Sigmoid colon (tissue), 7 donors: ENCODE measurements at regions of chr10 and their contacts with region 1.

Region 1: GRCh38 chr10:132421931-132422751 is 25.1 kb downstream of the PWWP2B start:
- DNase-seq: no peak
- H3K4me3 ChIP-seq: peak overlapping the region in 2 of 4 donors; percentile 27 to 28
- H3K27ac ChIP-seq: peak overlapping the region; percentile 88 to 93 (median 92)
- H3K4me1 ChIP-seq: peaks cover 0 to 72% (median 64%) of the 10 kb centered on the region in 4 donors
- H3K27me3 ChIP-seq: no peaks in the 10 kb centered on the region
- CTCF ChIP-seq: no peak
- EP300 ChIP-seq: no peak
- POLR2A ChIP-seq: no peak

Region 2: GRCh38 chr10:132308588-132309470 is 113.3 kb before region 1 on chr10:
- intact Hi-C with region 1: no loop called
- DNase-seq: no peak
- H3K4me3 ChIP-seq: peak overlapping the region; percentile 75 to 92 (median 89)
- H3K27ac ChIP-seq: peak overlapping the region; percentile 80 to 89 (median 86)
- H3K4me1 ChIP-seq: peaks cover 0 to 19% (median 16%) of the 10 kb centered on the region in 4 donors
- H3K27me3 ChIP-seq: no peaks in the 10 kb centered on the region
- CTCF ChIP-seq: no peak
- EP300 ChIP-seq: no peak
- POLR2A ChIP-seq: no peak

Region 3: DNA sequence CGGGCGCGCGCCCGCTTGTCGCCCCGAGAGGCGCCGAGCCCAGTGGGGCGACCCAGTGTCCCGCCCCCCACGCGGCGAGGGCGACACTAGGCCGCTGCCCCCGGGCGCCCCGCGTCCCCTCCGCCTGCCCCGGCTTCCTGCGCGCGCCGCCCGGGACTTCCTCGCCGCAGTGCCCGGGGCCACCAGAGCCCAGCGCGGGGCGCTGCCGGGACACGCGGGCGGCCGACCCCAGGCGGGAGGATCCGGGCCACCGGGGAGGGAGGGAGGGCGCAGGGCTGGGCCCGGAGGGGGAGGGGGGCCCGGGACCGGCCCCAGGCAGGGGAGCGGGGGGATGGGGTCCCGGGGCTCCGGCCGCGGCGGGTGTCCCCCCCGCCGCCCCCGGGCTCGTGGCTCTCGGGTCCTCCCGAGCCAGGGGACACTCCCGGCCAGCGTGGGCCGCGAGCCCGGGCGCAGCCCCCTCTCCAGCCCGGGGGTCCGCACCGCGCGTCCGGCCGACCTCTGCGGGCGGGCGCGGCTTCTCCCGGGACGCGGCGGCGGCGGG is 25.6 kb before region 1 on chr10:
- intact Hi-C with region 1: loop called (anchors 2 kb)
- DNase-seq: peak; percentile 85
- H3K4me3 ChIP-seq: peak overlapping the region; percentile 34 to 99 (median 76)
- H3K27ac ChIP-seq: peak overlapping the region; percentile 91 to 99 (median 96)
- H3K4me1 ChIP-seq: peaks cover 0 to 52% (median 51%) of the 10 kb centered on the region in 4 donors
- H3K27me3 ChIP-seq: no peaks in the 10 kb centered on the region
- CTCF ChIP-seq: peak in 1 of 4 experiments; percentile 43
- EP300 ChIP-seq: no peak
- POLR2A ChIP-seq: no peak